SK-N-SH (cell line): ENCODE measurements at regions of chr1 and their contacts with region 1.

Region 1: DNA sequence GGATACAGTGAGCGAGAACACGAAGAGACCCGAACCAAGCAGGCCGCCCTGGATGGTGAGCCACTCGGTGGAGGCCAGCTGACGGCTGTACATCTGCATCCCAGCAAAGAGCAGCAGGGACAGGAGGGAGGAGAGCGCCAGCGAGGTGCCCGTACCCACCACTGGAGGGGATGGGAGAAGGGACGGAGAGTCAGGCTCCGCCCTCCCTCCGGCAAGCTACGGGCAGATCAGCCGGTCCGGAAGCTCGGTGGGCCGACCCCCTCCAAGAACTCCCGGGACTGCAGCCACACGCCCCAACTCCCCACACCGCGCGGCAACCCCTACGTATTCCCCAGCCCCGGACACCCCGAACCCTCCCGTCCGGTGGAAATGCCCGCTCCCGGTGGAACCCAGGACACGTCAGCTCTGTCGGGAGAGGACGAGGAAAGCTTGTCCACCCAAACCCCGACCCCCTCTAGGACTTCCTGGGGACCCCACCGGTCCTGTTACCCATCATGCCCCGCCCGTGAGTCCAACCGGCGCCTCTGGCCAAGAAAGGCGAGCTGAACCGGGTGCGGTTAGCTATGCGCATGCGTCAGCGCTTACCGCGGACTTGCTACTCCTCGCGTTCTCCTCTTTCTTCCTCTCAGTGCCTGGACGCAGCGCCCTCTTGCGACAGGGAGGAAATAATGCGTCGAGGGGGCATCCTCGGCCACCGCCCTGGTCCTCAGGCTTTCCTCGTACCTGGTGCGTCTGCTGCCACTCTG is at the start of gene KRTCAP2:
- DNase-seq: peak; percentile 94
- H3K4me3 ChIP-seq: peak within 1 kb of the TSS; percentile 75 to 93
- H3K27ac ChIP-seq: peak within 1 kb of the TSS; percentile 92
- H3K4me1 ChIP-seq: peaks cover 0 to 33% of the 10 kb centered on the region in 2 experiments; a peak in 3 of 4 replicates
- H3K27me3 ChIP-seq: no peaks in the 10 kb centered on the region
- CTCF ChIP-seq: peak; percentile 91
- EP300 ChIP-seq: no peak
- RAD21 ChIP-seq: no peak
- polyA plus RNA-seq, gene KRTCAP2: 203 and 238 TPM in 2 replicates

Region 2: GRCh38 chr1:155078469-155079209 is 94.3 kb before region 1 on chr1 and contains the start of gene EFNA3:
- CTCF ChIA-PET with region 1: interaction called, 156 read pairs
- POLR2A ChIA-PET with region 1: no interaction called
- DNase-seq: peak; percentile 98
- H3K4me3 ChIP-seq: peak within 1 kb of the TSS; percentile 55 to 62
- H3K27ac ChIP-seq: no peak within 1 kb of the TSS; a peak in 1 of 4 replicates
- H3K4me1 ChIP-seq: peaks cover 15 to 16% of the 10 kb centered on the region in 2 experiments; a peak in 2 of 4 replicates
- H3K27me3 ChIP-seq: peaks cover 23% of the 10 kb centered on the region
- CTCF ChIP-seq: no peak
- EP300 ChIP-seq: no peak
- RAD21 ChIP-seq: no peak
- polyA plus RNA-seq, gene EFNA3: 5.5 and 6.0 TPM in 2 replicates

Region 3: GRCh38 chr1:155127105-155127964 is 45.6 kb before region 1 on chr1 and contains the start of gene EFNA1:
- CTCF ChIA-PET with region 1: interaction called, 67 read pairs
- POLR2A ChIA-PET with region 1: interaction called, 5 read pairs
- DNase-seq: peak; percentile 84
- H3K4me3 ChIP-seq: peak within 1 kb of the TSS; percentile 63 to 67
- H3K27ac ChIP-seq: peak within 1 kb of the TSS in 1 of 2 experiments; percentile 77; a peak in 2 of 4 replicates
- H3K4me1 ChIP-seq: peaks cover 19 to 45% of the 10 kb centered on the region in 2 experiments
- H3K27me3 ChIP-seq: no peaks in the 10 kb centered on the region
- CTCF ChIP-seq: no peak
- EP300 ChIP-seq: no peak
- RAD21 ChIP-seq: no peak
- polyA plus RNA-seq, gene EFNA1: 14.4 and 15.3 TPM in 2 replicates

Region 4: GRCh38 chr1:155185351-155186066 is 12.6 kb after region 1 on chr1:
- CTCF ChIA-PET with region 1: interaction called, 60 read pairs
- POLR2A ChIA-PET with region 1: interaction called, 9 read pairs
- DNase-seq: no peak
- H3K4me3 ChIP-seq: no peak overlapping the region
- H3K27ac ChIP-seq: peak overlapping the region in 1 of 2 experiments; percentile 62; a peak in 1 of 4 replicates
- H3K4me1 ChIP-seq: peaks cover 0 to 25% of the 10 kb centered on the region in 2 experiments; a peak in 1 of 4 replicates
- H3K27me3 ChIP-seq: no peaks in the 10 kb centered on the region
- CTCF ChIP-seq: no peak
- EP300 ChIP-seq: no peak
- RAD21 ChIP-seq: no peak

Region 5: DNA sequence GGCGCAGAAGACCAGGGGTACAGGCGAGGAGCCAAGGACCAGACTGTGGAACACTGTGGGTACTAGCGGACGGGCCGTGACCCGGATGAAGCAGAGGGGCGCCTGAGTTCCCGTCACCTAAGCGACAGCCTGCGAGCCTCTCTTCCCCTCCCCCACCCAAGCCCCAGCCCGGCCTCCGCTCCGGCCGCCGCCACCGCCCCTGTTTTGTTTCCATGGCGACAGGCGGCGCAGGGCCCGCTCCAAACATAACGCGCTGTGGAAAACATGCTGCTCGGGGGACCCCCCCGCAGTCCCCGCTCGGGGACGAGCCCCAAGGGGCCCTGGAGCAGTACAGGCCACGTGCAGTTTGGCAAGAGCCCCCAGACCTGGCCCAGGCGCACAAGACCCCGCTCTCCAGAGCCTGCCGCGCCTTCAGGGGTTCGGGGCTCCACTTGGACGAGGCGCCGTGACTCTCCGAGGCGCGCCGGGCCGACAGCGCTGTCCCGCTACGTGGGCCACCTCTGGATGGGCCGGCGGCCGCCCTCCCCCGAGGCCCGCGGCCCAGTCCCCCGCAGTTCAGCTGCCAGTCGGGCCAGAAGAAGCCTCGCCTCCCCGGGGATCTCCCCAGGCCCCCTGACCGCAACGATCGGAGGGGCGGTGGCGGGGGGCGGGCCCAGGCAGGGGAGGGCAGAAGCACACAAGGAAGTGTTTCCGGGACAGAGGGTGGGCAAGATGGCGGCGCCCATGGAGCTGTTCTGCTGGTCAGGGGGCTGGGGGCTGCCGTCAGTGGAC is 35.8 kb after region 1 on chr1 and contains the start of gene MTX1:
- CTCF ChIA-PET with region 1: interaction called, 46 read pairs
- POLR2A ChIA-PET with region 1: interaction called, 7 read pairs
- DNase-seq: peak; percentile 93
- H3K4me3 ChIP-seq: peak within 1 kb of the TSS; percentile 65 to 98
- H3K27ac ChIP-seq: peak within 1 kb of the TSS; percentile 93 to 98
- H3K4me1 ChIP-seq: peaks cover 0 to 29% of the 10 kb centered on the region in 2 experiments; a peak in 3 of 4 replicates
- H3K27me3 ChIP-seq: no peaks in the 10 kb centered on the region
- CTCF ChIP-seq: no peak
- EP300 ChIP-seq: peak; percentile 2 to 36; a peak in 1 of 4 replicates
- RAD21 ChIP-seq: no peak
- polyA plus RNA-seq, gene MTX1: 79.1 TPM in 2 replicates

Region 6: GRCh38 chr1:155244368-155245162 is 71.7 kb after region 1 on chr1:
- CTCF ChIA-PET with region 1: interaction called, 12 read pairs
- POLR2A ChIA-PET with region 1: no interaction called
- DNase-seq: peak; percentile 91
- H3K4me3 ChIP-seq: peak overlapping the region; percentile 49 to 65
- H3K27ac ChIP-seq: peak overlapping the region; percentile 75 to 92
- H3K4me1 ChIP-seq: peaks cover 0 to 24% of the 10 kb centered on the region in 2 experiments; a peak in 3 of 4 replicates
- H3K27me3 ChIP-seq: no peaks in the 10 kb centered on the region
- CTCF ChIP-seq: peak; percentile 56
- EP300 ChIP-seq: peak; percentile 67 to 77; a peak in 3 of 4 replicates
- RAD21 ChIP-seq: peak; percentile 49

Region 7: GRCh38 chr1:156020292-156021089 is 847.6 kb after region 1 on chr1 and contains the start of gene SSR2:
- CTCF ChIA-PET with region 1: no interaction called
- POLR2A ChIA-PET with region 1: no interaction called
- DNase-seq: peak; percentile 89
- H3K4me3 ChIP-seq: peak within 1 kb of the TSS; percentile 67 to 96
- H3K27ac ChIP-seq: peak within 1 kb of the TSS; percentile 44 to 82; a peak in 3 of 4 replicates
- H3K4me1 ChIP-seq: peaks cover 7 to 10% of the 10 kb centered on the region in 2 experiments; a peak in 3 of 4 replicates
- H3K27me3 ChIP-seq: no peaks in the 10 kb centered on the region
- CTCF ChIP-seq: 0 out of 2 replicates have a peak, but pooled peaks have one; percentile 7
- EP300 ChIP-seq: peak in 1 of 2 experiments; percentile 17; a peak in 1 of 4 replicates
- RAD21 ChIP-seq: no peak
- polyA plus RNA-seq, gene SSR2: 1,136 and 1,763 TPM in 2 replicates